WTC11 (cell line): ENCODE measurements at regions of chr17 and their contacts with region 1.

Region 1: GRCh38 chr17:45973099-45973780 is 25.8 kb upstream of the STH start:
- DNase-seq: no peak
- ATAC-seq: no peak
- H3K4me3 Mint-ChIP-seq: no peak overlapping the region
- H3K27ac Mint-ChIP-seq: no peak overlapping the region
- H3K4me1 Mint-ChIP-seq: no peaks in the 10 kb centered on the region
- H3K27me3 Mint-ChIP-seq: 0 out of 2 replicates have a peak, but pooled peaks cover 5% of the 10 kb centered on the region
- CTCF ChIP-seq: no peak

Region 2: GRCh38 chr17:45894022-45894784 is 79.0 kb before region 1 on chr17 and contains the start of gene MAPT:
- CTCF ChIA-PET with region 1: interaction called, 20 read pairs
- POLR2A ChIA-PET with region 1: no interaction called
- DNase-seq: peak; percentile 89
- ATAC-seq: peak; percentile 64
- H3K4me3 Mint-ChIP-seq: peak within 1 kb of the TSS; percentile 73
- H3K27ac Mint-ChIP-seq: no peak within 1 kb of the TSS
- H3K4me1 Mint-ChIP-seq: peaks cover 18% of the 10 kb centered on the region
- H3K27me3 Mint-ChIP-seq: peaks cover 86% of the 10 kb centered on the region
- CTCF ChIP-seq: peak; percentile 83
- total RNA-seq, gene MAPT: 2.2 to 4.2 TPM (median 2.9 TPM) in 3 replicates

Region 3: GRCh38 chr17:45942284-45942683 is 31.0 kb before region 1 on chr17:
- CTCF ChIA-PET with region 1: interaction called, 20 read pairs
- POLR2A ChIA-PET with region 1: no interaction called
- DNase-seq: no peak
- ATAC-seq: peak; percentile 82
- H3K4me3 Mint-ChIP-seq: peak overlapping the region; percentile 34
- H3K27ac Mint-ChIP-seq: no peak overlapping the region
- H3K4me1 Mint-ChIP-seq: peaks cover 42% of the 10 kb centered on the region
- H3K27me3 Mint-ChIP-seq: peaks cover 5% of the 10 kb centered on the region
- CTCF ChIP-seq: no peak

Region 4: DNA sequence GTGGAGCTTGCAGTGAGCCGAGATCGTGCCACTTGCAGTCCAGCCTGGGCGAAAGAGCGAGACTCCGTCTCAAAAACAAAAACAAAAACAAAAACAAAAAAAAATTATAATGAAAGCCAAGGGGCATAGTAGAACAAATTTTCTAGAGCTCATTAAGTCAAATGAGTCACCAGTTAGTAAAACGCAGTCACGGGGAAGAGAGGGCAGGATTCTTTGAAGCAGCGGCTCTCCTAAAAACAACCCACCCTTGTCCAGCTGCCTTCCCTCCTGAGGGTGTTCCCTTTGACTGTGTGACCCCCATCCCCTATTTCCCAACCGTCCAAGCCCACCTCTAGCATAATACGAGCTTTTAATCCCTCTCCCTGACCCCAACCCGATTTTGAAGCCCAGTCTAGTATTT is 18.3 kb before region 1 on chr17:
- CTCF ChIA-PET with region 1: interaction called, 36 read pairs
- POLR2A ChIA-PET with region 1: no interaction called
- DNase-seq: no peak
- ATAC-seq: no peak
- H3K4me3 Mint-ChIP-seq: no peak overlapping the region
- H3K27ac Mint-ChIP-seq: no peak overlapping the region
- H3K4me1 Mint-ChIP-seq: peaks cover 8% of the 10 kb centered on the region
- H3K27me3 Mint-ChIP-seq: peaks cover 10% of the 10 kb centered on the region
- CTCF ChIP-seq: no peak

Region 5: DNA sequence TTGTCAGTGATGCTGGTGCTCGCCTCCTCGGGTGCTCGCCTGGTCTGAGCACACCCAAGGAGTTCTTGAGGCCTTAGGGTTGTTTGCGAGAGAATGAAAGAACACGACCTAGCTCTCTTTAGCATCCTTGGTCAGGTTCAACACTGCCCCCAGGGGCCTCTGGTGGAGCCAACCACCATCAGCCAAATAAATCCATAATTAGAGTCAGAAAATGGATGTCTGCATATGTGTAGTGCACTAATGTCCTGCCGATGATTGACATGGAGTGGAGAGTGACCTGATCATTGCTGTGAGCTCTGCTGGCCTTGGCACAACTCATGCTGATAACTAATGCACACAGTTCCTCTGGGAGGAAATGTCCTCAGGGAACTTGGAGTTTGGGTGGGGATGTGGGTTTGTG is 17.6 kb after region 1 on chr17:
- CTCF ChIA-PET with region 1: interaction called, 33 read pairs
- POLR2A ChIA-PET with region 1: no interaction called
- DNase-seq: no peak
- ATAC-seq: peak; percentile 25; the same call in 1 of the 2 replicates
- H3K4me3 Mint-ChIP-seq: no peak overlapping the region
- H3K27ac Mint-ChIP-seq: no peak overlapping the region
- H3K4me1 Mint-ChIP-seq: peaks cover 12% of the 10 kb centered on the region; the same call in 1 of the 2 replicates
- H3K27me3 Mint-ChIP-seq: 0 out of 2 replicates have a peak, but pooled peaks cover 2% of the 10 kb centered on the region
- CTCF ChIP-seq: no peak

Region 6: DNA sequence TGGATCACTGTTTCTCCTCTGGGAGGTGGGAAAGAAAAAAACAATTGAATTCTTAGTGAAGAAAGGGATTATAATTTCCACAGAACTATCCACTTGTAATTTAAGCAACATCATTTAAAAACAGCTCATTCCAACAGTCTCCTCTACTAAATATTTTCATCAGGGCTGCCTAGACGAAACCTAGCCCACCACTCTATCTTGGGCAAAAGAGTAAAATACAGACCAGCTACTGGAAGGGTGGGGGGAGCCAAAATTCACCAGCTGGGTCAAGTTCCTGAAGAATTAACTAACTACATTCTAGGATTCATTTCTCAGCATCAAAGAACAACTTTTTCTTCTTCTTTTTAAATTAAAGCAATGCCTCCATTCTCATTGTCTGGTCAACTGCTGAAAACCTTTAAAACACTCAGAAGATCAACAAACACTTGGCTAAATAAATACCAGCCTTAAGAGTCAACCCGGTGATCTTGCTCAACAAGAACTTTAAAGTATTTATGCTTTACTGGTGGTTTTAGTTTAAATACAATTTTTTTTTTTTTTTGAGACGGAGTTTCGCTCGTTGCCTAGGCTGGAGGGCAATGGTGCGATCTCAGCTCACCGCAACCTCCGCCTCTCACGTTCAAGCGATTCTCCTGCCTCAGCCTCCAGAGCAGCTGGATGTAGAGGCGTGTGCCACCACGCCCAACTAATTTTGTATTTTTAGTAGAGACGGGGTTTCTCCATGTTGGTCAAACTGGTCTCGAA is 194.8 kb after region 1 on chr17:
- CTCF ChIA-PET with region 1: no interaction called
- POLR2A ChIA-PET with region 1: no interaction called
- DNase-seq: no peak
- ATAC-seq: no peak
- H3K4me3 Mint-ChIP-seq: no peak overlapping the region
- H3K27ac Mint-ChIP-seq: peak overlapping the region; percentile 57
- H3K4me1 Mint-ChIP-seq: peaks cover 54% of the 10 kb centered on the region
- H3K27me3 Mint-ChIP-seq: no peaks in the 10 kb centered on the region; the same call in 1 of the 2 replicates
- CTCF ChIP-seq: no peak